HEK293 (cell line): ENCODE measurements at regions of chr14 and their contacts with region 1.

Region 1: GRCh38 chr14:69107407-69108003 is 45.4 kb downstream of the DCAF5 start:
- H3K4me3 ChIP-seq: no peak overlapping the region
- H3K27ac ChIP-seq: no peak overlapping the region
- H3K4me1 ChIP-seq: peaks cover 5% of the 10 kb centered on the region; the same call in 1 of the 2 replicates
- CTCF ChIP-seq: peak; percentile 30; the same call in 1 of the 2 replicates

Region 2: DNA sequence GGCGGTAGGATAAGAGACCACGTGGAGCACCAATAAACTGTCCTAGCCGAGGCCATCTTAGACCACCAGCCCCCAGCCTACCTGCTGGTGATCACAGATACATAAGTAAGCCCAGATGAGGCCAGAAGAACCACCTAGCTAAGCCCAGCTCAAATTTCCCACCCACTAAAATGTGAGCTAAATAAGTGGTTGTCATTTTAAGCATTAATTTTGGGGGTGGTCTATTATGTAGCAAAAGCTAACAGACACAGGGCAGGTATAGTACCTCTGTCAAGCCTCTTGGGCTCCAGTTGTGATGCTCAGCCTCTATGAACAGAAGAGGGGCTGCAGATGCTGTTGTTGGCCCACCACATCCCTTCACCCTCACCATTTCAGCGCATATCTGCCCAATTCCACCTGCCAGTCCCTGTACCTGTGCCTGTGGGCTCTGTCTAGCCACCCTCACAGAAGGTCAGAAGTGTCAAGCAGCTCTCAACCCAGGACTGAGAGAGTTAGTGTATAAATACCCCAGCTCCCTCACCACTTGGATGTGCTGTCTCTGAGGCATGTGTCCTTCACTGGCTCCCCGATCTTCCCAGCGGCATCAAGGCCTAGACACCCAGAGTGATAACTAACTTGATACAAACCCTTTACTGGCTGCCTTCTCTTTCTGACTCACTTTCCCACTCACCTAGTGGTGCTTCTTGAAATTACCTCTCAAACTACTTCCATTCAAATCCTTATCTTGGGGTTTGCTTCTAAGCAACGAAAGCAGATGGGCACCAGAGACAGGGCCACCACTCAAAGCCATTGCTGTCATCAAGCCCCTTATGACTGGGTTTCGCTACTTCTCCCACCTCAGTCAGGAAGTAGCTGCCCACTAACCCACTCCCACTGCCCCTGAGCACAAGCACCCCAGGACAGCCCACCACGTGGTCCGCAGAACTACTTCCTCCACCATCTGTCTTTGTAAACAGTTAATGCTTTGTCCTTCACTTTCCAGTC is 332.1 kb before region 1 on chr14:
- CTCF ChIA-PET with region 1: no interaction called
- POLR2A ChIA-PET with region 1: no interaction called
- H3K4me3 ChIP-seq: no peak overlapping the region
- H3K27ac ChIP-seq: no peak overlapping the region
- H3K4me1 ChIP-seq: no peaks in the 10 kb centered on the region
- CTCF ChIP-seq: no peak

Region 3: DNA sequence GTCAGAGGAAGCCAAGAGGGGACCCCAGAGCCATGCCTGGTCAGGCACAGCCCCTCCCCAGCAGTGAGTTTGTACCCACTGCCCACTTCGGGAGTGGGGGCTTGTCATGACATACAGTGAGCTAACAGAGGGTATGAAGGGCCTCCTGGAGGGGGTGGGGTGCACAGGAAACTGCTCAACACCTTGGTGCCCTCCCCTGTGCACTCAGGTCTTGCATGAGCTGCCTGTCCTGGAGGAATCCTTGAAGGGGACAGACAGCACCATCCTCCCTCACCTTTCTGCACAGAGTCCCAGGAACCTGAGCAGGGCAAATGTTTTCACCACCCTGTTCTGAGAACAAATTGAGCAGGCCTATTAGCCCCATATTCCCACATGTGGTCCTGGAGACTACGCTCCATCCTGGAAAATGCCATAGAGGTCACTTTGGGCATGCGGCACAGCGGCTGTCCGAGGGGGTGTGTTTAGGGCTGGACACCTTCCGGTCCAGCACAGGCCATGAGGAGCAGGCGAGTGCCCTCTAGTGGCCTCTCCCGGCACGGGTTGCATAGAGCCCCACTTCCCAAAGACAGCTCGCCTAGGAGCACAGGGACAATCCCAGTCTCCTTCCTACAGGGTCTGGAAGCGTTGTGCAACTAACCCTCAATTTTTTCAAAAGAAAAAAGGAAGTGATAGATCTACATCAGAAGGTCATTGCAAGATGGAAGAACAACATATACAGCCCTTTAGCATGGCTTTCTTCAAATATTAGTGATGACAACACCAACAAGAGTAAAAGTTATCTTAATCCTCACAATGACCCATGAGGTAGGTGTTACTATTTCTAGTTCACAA is 282.8 kb before region 1 on chr14:
- CTCF ChIA-PET with region 1: interaction called, 12 read pairs
- POLR2A ChIA-PET with region 1: no interaction called
- H3K4me3 ChIP-seq: no peak overlapping the region
- H3K27ac ChIP-seq: no peak overlapping the region; the same call in 1 of the 2 replicates
- H3K4me1 ChIP-seq: peaks cover 2% of the 10 kb centered on the region; the same call in 1 of the 2 replicates
- CTCF ChIP-seq: peak; percentile 75; the same call in 1 of the 2 replicates

Region 4: DNA sequence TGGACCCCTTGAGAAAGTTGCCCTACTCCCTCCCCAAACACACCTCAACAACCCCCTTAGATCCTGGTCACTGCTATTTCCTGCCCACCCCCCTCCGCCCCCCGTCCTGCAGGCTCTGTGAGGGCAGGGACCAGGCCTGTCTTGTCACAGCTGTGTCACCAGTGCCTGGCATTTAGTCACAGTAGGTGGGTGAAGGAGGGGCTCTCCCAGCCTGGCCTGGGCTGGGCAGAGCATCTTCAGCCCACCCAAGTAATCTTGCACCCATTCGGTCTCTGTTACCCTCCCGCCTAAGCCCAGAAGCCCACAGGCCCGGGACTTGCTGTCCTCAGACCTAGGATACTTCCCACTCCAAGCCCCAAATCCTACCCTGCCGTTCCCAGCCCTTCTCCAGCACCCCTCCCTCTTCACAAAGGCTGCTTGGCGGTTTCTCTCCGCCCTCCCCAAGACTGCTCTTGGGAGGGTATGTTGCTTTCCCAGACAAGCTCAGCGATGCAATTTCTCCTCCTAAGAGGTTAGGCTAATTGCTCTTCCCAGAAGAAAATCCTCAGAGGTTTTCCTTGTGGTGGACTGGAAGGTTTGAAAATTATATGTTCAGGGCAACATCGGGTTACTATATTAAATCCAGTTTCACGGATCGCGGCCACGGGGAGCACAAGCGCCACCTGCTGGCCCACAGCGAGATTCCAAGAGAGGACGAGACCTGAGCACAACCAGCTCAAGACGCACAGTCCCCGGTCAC is 263.9 kb before region 1 on chr14:
- CTCF ChIA-PET with region 1: interaction called, 14 read pairs
- POLR2A ChIA-PET with region 1: no interaction called
- H3K4me3 ChIP-seq: peak overlapping the region; percentile 6; the same call in 1 of the 2 replicates
- H3K27ac ChIP-seq: no peak overlapping the region; the same call in 1 of the 2 replicates
- H3K4me1 ChIP-seq: 0 out of 2 replicates have a peak, but pooled peaks cover 3% of the 10 kb centered on the region
- CTCF ChIP-seq: peak; percentile 74

Region 5: GRCh38 chr14:68862954-68863594 is 244.4 kb before region 1 on chr14:
- CTCF ChIA-PET with region 1: interaction called, 67 read pairs
- POLR2A ChIA-PET with region 1: no interaction called
- H3K4me3 ChIP-seq: no peak overlapping the region
- H3K27ac ChIP-seq: no peak overlapping the region
- H3K4me1 ChIP-seq: no peaks in the 10 kb centered on the region
- CTCF ChIP-seq: 0 out of 2 replicates have a peak, but pooled peaks have one; percentile 24

Region 6: DNA sequence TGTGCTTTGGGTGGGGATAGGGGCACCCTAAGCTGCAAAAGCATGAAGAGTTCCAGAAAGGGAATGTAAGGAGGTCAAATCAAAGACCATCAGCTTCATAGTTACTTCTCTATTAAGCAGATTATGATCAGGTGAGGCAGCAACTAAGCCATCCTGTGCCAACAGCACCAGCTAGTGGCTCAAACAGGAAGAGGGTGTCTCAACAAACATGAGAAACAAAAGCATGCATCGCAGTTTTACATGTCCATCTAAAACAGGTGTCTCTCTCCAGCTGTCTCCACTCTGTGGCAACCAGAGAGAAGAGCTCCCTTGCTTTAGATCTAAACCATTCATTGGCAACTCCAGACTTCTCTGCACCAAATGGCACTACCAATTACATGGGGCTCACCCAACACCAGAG is 181.3 kb before region 1 on chr14:
- CTCF ChIA-PET with region 1: interaction called, 10 read pairs
- POLR2A ChIA-PET with region 1: no interaction called
- H3K4me3 ChIP-seq: no peak overlapping the region
- H3K27ac ChIP-seq: no peak overlapping the region
- H3K4me1 ChIP-seq: no peaks in the 10 kb centered on the region; the same call in 1 of the 2 replicates
- CTCF ChIP-seq: no peak

Region 7: GRCh38 chr14:69066396-69067171 is 40.9 kb before region 1 on chr14:
- CTCF ChIA-PET with region 1: no interaction called
- POLR2A ChIA-PET with region 1: no interaction called
- H3K4me3 ChIP-seq: no peak overlapping the region
- H3K27ac ChIP-seq: no peak overlapping the region
- H3K4me1 ChIP-seq: no peaks in the 10 kb centered on the region
- CTCF ChIP-seq: no peak

Region 8: GRCh38 chr14:69090187-69090789 is 17.2 kb before region 1 on chr14:
- CTCF ChIA-PET with region 1: interaction called, 19 read pairs
- POLR2A ChIA-PET with region 1: no interaction called
- H3K4me3 ChIP-seq: no peak overlapping the region
- H3K27ac ChIP-seq: no peak overlapping the region
- H3K4me1 ChIP-seq: 0 out of 2 replicates have a peak, but pooled peaks cover 7% of the 10 kb centered on the region
- CTCF ChIP-seq: no peak